OCI-LY7 (cell line): ENCODE measurements at regions of chr3 and their contacts with region 1.

Region 1: DNA sequence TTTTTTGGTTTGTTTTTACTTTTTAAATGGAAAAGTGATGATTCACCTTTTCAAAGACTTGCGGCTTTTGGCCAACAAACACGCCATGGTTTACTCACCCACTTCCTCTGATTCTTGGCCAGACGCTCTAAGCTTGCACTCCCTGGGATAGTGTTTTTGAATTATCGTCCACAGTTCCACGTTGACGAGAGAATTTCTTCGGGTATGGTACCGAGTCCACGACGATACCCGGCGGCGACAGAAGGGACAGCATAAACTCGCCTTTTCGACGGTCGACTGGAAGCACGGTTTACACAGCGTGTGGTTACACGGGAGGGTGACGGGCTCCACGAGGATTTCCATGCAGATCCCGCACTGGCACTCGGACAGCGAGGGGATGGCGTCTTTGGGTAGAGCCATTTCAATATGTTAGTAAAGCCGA is 783 bp downstream of the RNF168 start:
- DNase-seq: peak; percentile 54
- H3K4me3 ChIP-seq: peak overlapping the region; percentile 80
- H3K27ac ChIP-seq: peak overlapping the region; percentile 91
- H3K4me1 ChIP-seq: peaks cover 16% of the 10 kb centered on the region
- CTCF ChIP-seq: no peak; the same call in 1 of the 2 replicates

Region 2: GRCh38 chr3:196081791-196082618 is 420.8 kb before region 1 on chr3 and contains the start of gene TFRC:
- CTCF ChIA-PET with region 1: no interaction called
- POLR2A ChIA-PET with region 1: no interaction called
- intact Hi-C with region 1: loop called (anchors 2 kb)
- DNase-seq: peak; percentile 98
- H3K4me3 ChIP-seq: peak within 1 kb of the TSS; percentile 77
- H3K27ac ChIP-seq: peak within 1 kb of the TSS; percentile 75
- H3K4me1 ChIP-seq: peaks cover 27% of the 10 kb centered on the region
- CTCF ChIP-seq: peak; percentile 26; the same call in 1 of the 2 replicates
- total RNA-seq, gene TFRC: 127 and 129 TPM in 2 replicates

Region 3: DNA sequence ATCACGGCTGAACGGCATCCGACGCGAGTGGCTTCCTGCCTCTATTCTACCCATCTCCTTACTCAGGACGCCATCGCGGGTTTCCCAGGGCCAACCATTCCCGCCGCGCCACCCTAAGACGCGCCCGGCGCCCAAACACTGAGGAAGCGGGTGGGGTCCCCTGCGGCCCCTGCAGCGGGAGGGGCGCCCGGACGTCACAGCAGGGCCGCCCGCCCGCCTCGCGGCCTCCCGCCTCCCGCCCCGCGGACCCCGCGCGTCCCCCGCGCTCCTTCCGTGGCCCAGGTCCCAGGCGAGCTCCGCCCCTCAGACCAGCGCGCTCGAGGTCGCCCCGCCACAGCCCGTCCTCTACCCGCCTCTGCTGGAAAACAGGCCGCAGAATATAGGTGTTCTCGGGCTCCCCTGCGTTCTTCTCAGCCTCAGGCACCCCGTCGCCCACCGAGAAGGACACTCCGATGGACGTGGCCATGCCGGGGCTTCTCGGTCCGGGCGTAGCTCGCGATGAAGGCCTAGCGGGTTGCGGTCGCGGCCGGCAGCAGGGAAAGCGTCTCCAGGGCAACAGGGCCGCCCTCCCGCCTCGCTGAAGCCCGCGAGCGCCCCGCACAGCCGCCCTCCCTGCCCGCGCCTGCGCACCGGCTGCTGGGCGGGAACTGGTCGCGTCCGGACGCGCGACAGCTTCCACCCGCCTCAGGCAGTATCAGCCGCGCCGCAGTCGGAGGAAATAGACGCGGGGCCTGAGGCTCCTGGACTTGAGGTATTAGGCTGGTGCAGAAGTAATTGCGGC is 184.9 kb before region 1 on chr3 and contains the start of gene DYNLT2B:
- CTCF ChIA-PET with region 1: no interaction called
- POLR2A ChIA-PET with region 1: no interaction called
- intact Hi-C with region 1: loop called (anchors 5 kb)
- DNase-seq: peak; percentile 89
- H3K4me3 ChIP-seq: peak within 1 kb of the TSS; percentile 75
- H3K27ac ChIP-seq: peak within 1 kb of the TSS; percentile 61
- H3K4me1 ChIP-seq: peaks cover 5% of the 10 kb centered on the region
- CTCF ChIP-seq: peak; percentile 28; the same call in 1 of the 2 replicates
- total RNA-seq, gene DYNLT2B: 17.9 and 18.1 TPM in 2 replicates

Region 4: GRCh38 chr3:196432137-196432879 is 70.5 kb before region 1 on chr3 and contains the start of gene UBXN7:
- CTCF ChIA-PET with region 1: no interaction called
- POLR2A ChIA-PET with region 1: interaction called, 3 read pairs
- intact Hi-C with region 1: loop called (anchors 2 kb)
- DNase-seq: peak; percentile 94
- H3K4me3 ChIP-seq: peak within 1 kb of the TSS; percentile 98
- H3K27ac ChIP-seq: peak within 1 kb of the TSS; percentile 71
- H3K4me1 ChIP-seq: peaks cover 18% of the 10 kb centered on the region
- CTCF ChIP-seq: no peak
- total RNA-seq, gene UBXN7: 12.7 and 28.9 TPM in 2 replicates

Region 5: DNA sequence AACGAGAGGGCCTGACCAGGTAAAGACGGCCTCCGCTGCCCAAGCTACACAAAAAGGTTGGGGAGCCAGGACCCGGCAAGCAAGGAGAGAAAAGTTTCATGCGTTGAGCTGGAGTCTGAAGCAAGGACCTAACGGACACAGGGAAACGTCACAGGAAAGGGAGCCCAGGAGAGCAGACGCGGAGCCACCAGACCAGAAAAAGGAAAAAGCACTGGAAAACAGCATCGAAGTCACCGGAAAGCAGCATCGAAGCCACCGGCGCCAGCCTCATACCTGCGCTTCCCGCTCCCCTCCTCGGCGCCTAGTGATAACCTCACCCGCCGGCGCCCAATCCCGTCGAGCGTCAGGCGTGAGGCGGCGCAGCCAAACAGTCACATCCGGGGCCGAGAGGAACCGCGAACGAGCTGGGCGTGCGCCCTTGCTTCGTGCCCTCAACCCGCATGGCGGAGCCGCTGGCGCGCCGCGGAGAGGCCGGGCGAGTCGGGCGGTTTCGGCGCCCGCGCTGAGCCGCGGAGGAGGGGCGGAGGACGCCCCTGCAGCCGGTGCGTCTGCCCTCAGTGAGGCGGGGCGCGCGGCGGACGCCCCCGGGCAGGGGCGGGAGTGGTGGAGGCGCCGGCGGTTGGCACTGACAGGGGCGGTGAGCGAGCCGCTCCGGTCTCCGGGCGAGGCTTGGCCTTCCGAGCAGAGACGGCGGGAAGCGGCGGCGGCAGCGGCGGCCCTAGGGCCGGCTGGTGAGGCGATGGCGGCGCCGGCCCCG is 65.6 kb after region 1 on chr3 and contains the starts of genes FBXO45 and WDR53:
- CTCF ChIA-PET with region 1: no interaction called
- POLR2A ChIA-PET with region 1: no interaction called
- intact Hi-C with region 1: loop called (anchors 2 kb)
- DNase-seq: peak; percentile 97
- H3K4me3 ChIP-seq: peak within 1 kb of the TSS; percentile 85
- H3K27ac ChIP-seq: peak within 1 kb of the TSS; percentile 52
- H3K4me1 ChIP-seq: peaks cover 28% of the 10 kb centered on the region
- CTCF ChIP-seq: no peak
- total RNA-seq, gene FBXO45: 10.6 and 12.5 TPM in 2 replicates
- total RNA-seq, gene WDR53: 10.8 TPM in 2 replicates

Region 6: GRCh38 chr3:196962108-196962929 is 459.5 kb after region 1 on chr3:
- CTCF ChIA-PET with region 1: no interaction called
- POLR2A ChIA-PET with region 1: no interaction called
- intact Hi-C with region 1: no loop called
- DNase-seq: no peak
- H3K4me3 ChIP-seq: no peak overlapping the region
- H3K27ac ChIP-seq: no peak overlapping the region
- H3K4me1 ChIP-seq: peaks cover 11% of the 10 kb centered on the region
- CTCF ChIP-seq: no peak